ENCODE measurements at regions of chr3 and their contacts with region 1.

Region 1: DNA sequence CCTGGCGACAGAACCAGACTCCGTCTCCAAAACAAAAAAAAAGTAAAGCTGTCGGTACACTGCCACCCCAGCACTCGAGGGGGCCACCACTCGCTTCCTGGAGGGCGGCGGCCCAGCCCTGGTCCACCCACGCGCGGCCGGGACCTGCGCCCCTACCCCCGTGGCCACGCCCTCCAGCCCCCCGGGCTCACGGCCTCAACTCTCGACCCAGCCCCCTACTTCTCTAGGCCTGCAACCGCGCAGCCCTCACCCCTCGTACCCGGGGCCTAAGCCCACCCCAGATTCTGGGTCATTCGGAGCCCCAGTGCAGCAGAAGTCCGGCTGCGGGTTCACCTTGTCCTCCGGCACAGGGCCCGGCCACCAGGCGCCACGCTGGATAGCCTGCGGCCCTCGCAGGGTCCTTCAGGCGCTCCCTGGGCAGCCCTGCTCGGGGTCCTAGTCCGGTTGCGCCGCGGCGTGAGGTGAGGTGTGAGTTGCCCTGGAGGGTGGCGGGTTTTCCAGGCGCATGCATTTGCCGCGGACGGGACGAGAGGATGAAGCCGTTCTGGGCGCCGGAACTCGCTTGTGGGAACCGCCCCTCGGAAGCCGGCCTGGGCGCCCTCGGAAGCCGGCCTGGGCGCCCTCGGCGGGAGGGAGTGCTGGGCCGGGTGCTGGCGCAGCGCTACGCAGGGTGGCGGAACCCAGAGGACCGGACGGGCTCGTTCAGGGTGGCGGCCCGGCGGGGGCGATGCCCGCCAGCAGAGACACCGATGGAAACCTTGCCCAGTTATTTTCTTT is 32.3 kb downstream of the SPINK8 start:
- DNase-seq: peak; percentile 68 to 89 (median 83)
- ATAC-seq: peak; percentile 77 to 81
- H3K4me3 Mint-ChIP-seq: peak within 1 kb of the TSS; percentile 87 to 97 (median 92)
- H3K27ac Mint-ChIP-seq: peak within 1 kb of the TSS; percentile 87 to 98 (median 96)
- H3K4me1 Mint-ChIP-seq: peaks cover 27 to 50% (median 43%) of the 10 kb centered on the region in 4 donors
- H3K27me3 Mint-ChIP-seq: no peaks in the 10 kb centered on the region

Region 2: GRCh38 chr3:48268381-48269183 is 32.6 kb before region 1 on chr3:
- POLR2A ChIA-PET with region 1: interaction called, 22 read pairs
- DNase-seq: peak; percentile 48 to 88 (median 80)
- ATAC-seq: peak; percentile 96 to 97
- H3K4me3 Mint-ChIP-seq: peak overlapping the region; percentile 65 to 89 (median 82)
- H3K27ac Mint-ChIP-seq: peak overlapping the region; percentile 84 to 99 (median 93)
- H3K4me1 Mint-ChIP-seq: peaks cover 18 to 37% (median 33%) of the 10 kb centered on the region in 4 donors
- H3K27me3 Mint-ChIP-seq: no peaks in the 10 kb centered on the region